Caco-2 (cell line): ENCODE measurements at regions of chr5 and their contacts with region 1.

Region 1: GRCh38 chr5:40404613-40405012 is 275.1 kb upstream of the PTGER4 start:
- DNase-seq: no peak
- H3K4me3 ChIP-seq: no peak overlapping the region
- H3K4me3 Mint-ChIP-seq: no peak overlapping the region
- H3K27ac Mint-ChIP-seq: no peak overlapping the region
- H3K4me1 ChIP-seq: no peaks in the 10 kb centered on the region
- H3K4me1 Mint-ChIP-seq: no peaks in the 10 kb centered on the region
- H3K27me3 ChIP-seq: no peaks in the 10 kb centered on the region
- H3K27me3 Mint-ChIP-seq: peaks cover 2% of the 10 kb centered on the region
- CTCF ChIP-seq: no peak

Region 2: GRCh38 chr5:40321514-40321913 is 83.1 kb before region 1 on chr5:
- CTCF ChIA-PET with region 1: no interaction called
- POLR2A ChIA-PET with region 1: no interaction called
- intact Hi-C with region 1: no loop called
- DNase-seq: no peak
- H3K4me3 ChIP-seq: no peak overlapping the region
- H3K4me3 Mint-ChIP-seq: no peak overlapping the region
- H3K27ac Mint-ChIP-seq: no peak overlapping the region
- H3K4me1 ChIP-seq: no peaks in the 10 kb centered on the region
- H3K4me1 Mint-ChIP-seq: no peaks in the 10 kb centered on the region
- H3K27me3 ChIP-seq: no peaks in the 10 kb centered on the region
- H3K27me3 Mint-ChIP-seq: peaks cover 6% of the 10 kb centered on the region
- CTCF ChIP-seq: no peak

Region 3: DNA sequence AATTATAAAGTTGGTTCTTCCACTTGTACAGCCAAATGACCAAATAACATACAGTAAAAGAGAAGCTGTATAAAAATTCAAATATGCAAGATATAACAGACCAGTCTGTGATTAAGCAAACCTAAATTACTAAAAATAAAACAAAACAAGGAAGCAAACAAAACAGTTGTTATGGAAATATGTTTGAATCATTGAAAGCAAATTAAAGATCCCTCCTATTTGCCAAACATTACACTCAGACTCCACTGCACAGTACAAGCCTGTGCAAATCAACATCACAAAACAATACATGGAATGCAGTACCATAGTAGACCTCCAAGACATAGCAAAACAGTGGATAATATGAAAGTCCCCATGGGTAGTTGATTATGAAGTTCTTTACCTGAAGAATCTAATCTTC is 13.0 kb before region 1 on chr5:
- CTCF ChIA-PET with region 1: no interaction called
- POLR2A ChIA-PET with region 1: no interaction called
- intact Hi-C with region 1: loop called (anchors 1 kb)
- DNase-seq: no peak
- H3K4me3 ChIP-seq: no peak overlapping the region
- H3K4me3 Mint-ChIP-seq: no peak overlapping the region
- H3K27ac Mint-ChIP-seq: no peak overlapping the region
- H3K4me1 ChIP-seq: no peaks in the 10 kb centered on the region
- H3K4me1 Mint-ChIP-seq: no peaks in the 10 kb centered on the region
- H3K27me3 ChIP-seq: no peaks in the 10 kb centered on the region
- H3K27me3 Mint-ChIP-seq: peaks cover 6% of the 10 kb centered on the region
- CTCF ChIP-seq: no peak